Aorta (tissue), 5 donors: ENCODE measurements at regions of chr2 and their contacts with region 1.

Region 1: GRCh38 chr2:11477994-11478393 is 12.0 kb upstream of the E2F6 start:
- DNase-seq: peak; percentile 91 to 93
- ATAC-seq: peak; percentile 66
- H3K4me3 ChIP-seq: no peak overlapping the region
- H3K27ac ChIP-seq: no peak overlapping the region
- H3K4me1 ChIP-seq: no peaks in the 10 kb centered on the region
- H3K27me3 ChIP-seq: no peaks in the 10 kb centered on the region

Region 2: GRCh38 chr2:11224887-11225286 is 253.1 kb before region 1 on chr2:
- intact Hi-C with region 1: no loop called
- DNase-seq: no peak
- ATAC-seq: no peak
- H3K4me3 ChIP-seq: no peak overlapping the region
- H3K27ac ChIP-seq: no peak overlapping the region
- H3K4me1 ChIP-seq: peaks cover 0 to 3% of the 10 kb centered on the region in 2 donors
- H3K27me3 ChIP-seq: no peaks in the 10 kb centered on the region

Region 3: DNA sequence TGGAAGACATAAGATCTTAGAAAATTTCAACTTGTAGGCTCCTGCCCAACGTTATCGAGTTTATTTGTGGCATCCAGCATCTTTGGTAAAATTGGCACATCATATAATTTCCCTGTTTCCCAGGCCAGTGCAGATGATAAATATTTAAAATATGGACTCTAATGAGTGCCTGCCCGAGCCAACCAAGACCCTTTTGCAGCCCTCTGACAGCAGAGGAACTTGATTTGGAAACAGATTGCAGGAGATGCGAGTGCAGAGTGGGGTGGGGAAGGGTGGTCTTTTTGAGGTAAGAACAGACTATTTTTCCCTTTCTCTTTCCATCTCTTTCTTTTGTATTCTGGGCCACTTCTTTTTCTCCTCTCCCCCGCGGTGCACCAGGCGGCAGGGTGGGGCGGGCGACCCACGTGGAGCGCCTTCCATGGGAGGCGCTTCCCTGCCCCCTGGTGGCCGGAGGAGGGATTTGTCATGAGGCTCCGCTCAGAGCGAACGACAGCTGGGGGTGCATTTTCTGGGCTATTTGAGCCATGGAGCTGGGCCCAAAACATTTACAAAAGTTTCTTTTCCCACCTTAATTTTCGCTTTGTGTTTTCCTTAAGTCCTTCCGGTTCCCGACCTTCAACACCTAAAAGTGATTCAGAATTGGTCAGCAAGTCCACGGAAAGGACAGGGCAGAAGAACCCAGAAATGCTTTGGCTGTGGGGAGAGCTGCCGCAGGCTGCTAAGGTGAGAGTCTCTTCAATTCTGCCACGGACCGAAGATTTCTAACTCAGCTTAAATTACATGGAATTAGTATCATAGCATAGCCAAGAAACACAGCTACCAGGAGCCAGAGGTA is 301.1 kb after region 1 on chr2:
- intact Hi-C with region 1: loop called (anchors 5 kb)
- DNase-seq: peak; percentile 83 to 94
- ATAC-seq: peak; percentile 94
- H3K4me3 ChIP-seq: no peak overlapping the region
- H3K27ac ChIP-seq: no peak overlapping the region
- H3K4me1 ChIP-seq: no peaks in the 10 kb centered on the region
- H3K27me3 ChIP-seq: no peaks in the 10 kb centered on the region